ENCODE measurements at regions of chr12 and their contacts with region 1.

Region 1: DNA sequence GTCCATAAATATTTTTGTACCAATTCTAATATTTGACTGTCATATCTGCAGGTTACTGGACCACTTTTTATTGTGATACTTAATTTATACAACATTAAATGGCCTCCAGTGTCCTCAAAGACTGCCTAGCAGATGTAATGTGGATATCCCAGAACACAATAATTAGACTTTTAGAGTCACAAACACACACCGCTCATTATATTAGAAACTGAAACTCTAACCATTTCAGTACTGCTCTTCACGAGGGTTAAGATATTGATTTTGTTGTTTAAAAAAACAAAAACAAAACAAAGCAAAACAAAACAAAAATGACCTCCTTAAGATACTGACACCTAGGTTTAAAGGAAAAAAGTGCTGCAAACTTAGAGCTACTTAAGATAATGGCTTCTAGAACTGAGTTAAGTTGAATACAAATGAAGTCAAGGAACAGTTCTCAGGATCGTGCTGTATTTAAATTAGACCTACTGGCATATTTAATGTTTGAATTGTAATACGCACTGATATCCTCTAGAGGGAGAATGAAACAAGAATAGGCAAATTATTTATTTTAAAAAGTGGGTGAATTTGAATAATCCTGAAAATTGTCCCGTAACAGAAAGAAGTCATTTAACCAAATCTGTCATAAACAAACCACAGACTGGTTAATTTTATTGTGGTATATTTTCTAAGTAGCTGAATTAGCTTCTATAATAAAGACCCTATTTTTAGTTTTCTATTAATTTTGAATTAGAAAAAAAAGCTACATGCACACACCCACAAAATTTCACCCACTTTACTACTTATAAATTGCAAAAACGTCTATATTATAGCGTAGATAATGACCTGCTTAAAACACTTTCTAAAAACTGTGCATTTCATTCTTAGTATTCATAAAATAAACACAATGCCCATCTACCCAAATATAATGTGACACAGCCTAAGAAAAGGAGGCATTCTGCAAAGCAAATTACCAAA is 395.2 kb upstream of the DCN start:
- DNase-seq: no peak
- ATAC-seq: peak in 2 of 4 donors; percentile 45 to 50
- H3K4me3 ChIP-seq: peak overlapping the region in 9 of 12 donors; percentile 17 to 37 (median 26)
- H3K27ac ChIP-seq: peak overlapping the region in 3 of 12 donors; percentile 10 to 45 (median 35)
- H3K4me1 ChIP-seq: peaks cover 0 to 15% (median 7%) of the 10 kb centered on the region in 12 donors
- H3K27me3 ChIP-seq: no peaks in the 10 kb centered on the region
- CTCF ChIP-seq: peak; percentile 62 to 82 (median 72)
- POLR2A ChIP-seq: no peak

Region 2: DNA sequence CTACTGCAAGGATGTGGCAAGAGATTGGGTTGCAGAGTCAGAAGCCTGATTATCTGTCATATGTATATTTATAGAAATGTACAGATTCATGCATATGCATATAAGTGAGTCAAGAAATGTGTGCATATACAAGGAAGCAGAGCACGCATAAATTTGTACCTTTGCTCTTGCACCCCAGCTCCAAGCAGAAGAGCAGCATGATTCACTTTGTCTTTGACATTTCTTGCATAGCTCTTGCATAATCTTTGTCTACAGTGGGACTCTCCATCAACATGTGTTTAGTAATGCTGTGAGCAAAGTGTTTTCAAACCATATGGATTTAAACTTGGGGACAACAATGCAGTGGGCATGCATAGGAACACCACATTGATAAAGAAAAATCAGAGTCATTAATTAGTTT is 64.5 kb before region 1 on chr12:
- intact Hi-C with region 1: no loop called
- DNase-seq: no peak
- ATAC-seq: no peak
- H3K4me3 ChIP-seq: no peak overlapping the region
- H3K27ac ChIP-seq: no peak overlapping the region
- H3K4me1 ChIP-seq: peaks cover 0 to under 1% (median 0%) of the 10 kb centered on the region in 12 donors
- H3K27me3 ChIP-seq: no peaks in the 10 kb centered on the region
- CTCF ChIP-seq: no peak
- POLR2A ChIP-seq: no peak

Region 3: GRCh38 chr12:91811481-91812287 is 233.8 kb after region 1 on chr12:
- intact Hi-C with region 1: loop called in 2 of 10 experiments (anchors 2 to 10 kb)
- DNase-seq: peak; percentile 56 to 77 (median 67)
- ATAC-seq: peak in 3 of 4 donors; percentile 61 to 76 (median 68)
- H3K4me3 ChIP-seq: no peak overlapping the region
- H3K27ac ChIP-seq: no peak overlapping the region
- H3K4me1 ChIP-seq: no peaks in the 10 kb centered on the region
- H3K27me3 ChIP-seq: no peaks in the 10 kb centered on the region
- CTCF ChIP-seq: peak; percentile 72 to 90 (median 82)
- POLR2A ChIP-seq: no peak

Measured in heart left ventricle (tissue), 16 donors.